PC-9 (cell line): ENCODE measurements at regions of chr1 and their contacts with region 1.

Region 1: DNA sequence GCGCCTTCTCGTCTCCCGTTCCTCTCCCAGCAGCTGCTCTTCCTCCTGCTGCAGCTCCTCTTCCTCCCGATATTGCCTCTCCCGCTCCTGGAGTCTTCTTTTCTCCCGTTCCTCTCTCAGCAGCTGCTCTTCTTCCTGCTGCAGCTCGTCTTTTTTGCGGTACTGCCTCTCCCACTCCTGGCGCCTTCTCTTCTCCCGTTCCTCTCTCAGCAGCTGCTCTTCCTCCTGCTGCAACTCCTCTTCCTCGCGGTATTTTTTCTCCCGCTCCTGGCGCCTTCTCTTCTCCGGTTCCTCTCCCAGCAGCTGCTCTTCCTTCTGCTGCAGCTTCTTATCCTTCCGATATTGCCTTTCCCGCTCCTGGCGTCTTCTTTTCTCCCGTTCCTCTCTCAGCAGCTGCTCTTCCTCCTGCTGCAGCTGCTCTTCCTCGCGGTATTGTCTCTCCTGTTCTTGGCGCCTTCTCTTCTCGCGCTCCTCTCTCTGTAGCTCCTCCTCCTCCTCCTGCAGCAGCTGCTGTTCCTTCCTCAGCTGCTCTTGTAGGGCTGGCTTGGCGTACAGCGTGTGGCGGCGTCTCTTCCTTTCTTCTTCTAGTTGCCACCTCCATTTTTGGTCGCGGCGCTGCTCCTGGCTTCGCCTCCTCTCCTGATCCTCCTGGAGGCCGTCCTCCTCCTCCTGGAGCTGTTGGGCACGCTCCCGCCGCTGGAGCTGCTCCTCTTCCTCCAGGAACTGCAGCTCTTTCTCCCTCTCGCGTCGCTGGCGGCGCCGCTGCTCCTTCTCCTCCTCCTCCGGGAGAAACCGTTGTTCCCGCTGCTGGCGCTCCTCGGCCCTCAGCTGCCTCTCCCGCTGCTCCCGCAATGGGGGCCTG is 5.0 kb downstream of the TCHH start:
- DNase-seq: peak; percentile 38 to 58
- H3K4me3 ChIP-seq: peak overlapping the region; percentile 79
- H3K27ac ChIP-seq: no peak overlapping the region
- H3K4me1 ChIP-seq: peaks cover 15% of the 10 kb centered on the region; the same call in 1 of the 2 replicates
- H3K27me3 ChIP-seq: peaks cover 42% of the 10 kb centered on the region
- CTCF ChIP-seq: no peak

Region 2: DNA sequence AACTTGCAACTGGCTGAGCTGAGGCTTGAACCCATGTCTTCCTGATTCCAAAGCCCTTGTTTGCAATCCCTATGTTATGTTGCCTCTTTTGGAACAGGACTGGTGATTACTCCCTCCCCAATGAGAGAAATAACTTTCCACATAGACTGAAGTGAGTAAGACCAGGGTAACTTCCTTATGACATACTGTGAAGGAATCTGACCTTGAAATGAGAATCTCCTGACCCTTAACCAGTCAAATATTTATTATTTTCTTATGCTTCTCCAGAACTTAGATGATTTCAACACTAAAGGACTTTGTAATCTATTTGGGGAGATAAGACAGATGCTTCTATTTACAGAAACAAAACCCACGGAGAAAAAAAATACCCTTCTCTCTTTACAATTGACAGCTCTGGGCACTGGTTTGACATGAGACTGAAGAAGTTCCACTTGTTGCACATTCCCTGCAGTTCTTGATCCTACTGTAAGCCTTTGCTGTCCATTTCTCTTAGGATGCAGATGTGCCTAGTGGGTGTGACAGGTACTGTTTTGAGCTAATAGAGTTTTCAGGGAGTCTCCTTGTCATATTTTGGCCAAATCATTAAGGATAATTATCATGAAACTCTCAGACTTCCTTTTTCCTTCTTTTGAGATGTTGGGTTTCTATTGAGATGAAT is 52.7 kb after region 1 on chr1:
- CTCF ChIA-PET with region 1: interaction called, 17 read pairs
- POLR2A ChIA-PET with region 1: interaction called, 5 read pairs
- intact Hi-C with region 1: no loop called
- DNase-seq: peak in 1 of 2 experiments; percentile 97
- H3K4me3 ChIP-seq: no peak overlapping the region
- H3K27ac ChIP-seq: peak overlapping the region; percentile 78
- H3K4me1 ChIP-seq: peaks cover 59% of the 10 kb centered on the region
- H3K27me3 ChIP-seq: no peaks in the 10 kb centered on the region
- CTCF ChIP-seq: 0 out of 2 replicates have a peak, but pooled peaks have one; percentile 29